H1 (cell line): ENCODE measurements at regions of chr5 and their contacts with region 1.

Region 1: GRCh38 chr5:138975098-138975847 is 100.1 kb upstream of the LRRTM2 start:
- DNase-seq: no peak
- H3K4me3 ChIP-seq: no peak overlapping the region
- H3K27ac ChIP-seq: no peak overlapping the region
- H3K4me1 ChIP-seq: peaks cover 0 to 5% (median 0%) of the 10 kb centered on the region in 4 experiments; a peak in 1 of 7 replicates
- H3K27me3 ChIP-seq: no peaks in the 10 kb centered on the region; a peak in 1 of 7 replicates
- CTCF ChIP-seq: no peak
- EP300 ChIP-seq: no peak
- POLR2A ChIP-seq: no peak
- RAD21 ChIP-seq: no peak

Region 2: GRCh38 chr5:138752951-138753793 is 222.1 kb before region 1 on chr5 and contains the start of gene CTNNA1:
- CTCF ChIA-PET with region 1: no interaction called
- POLR2A ChIA-PET with region 1: no interaction called
- DNase-seq: peak in 1 of 2 experiments; percentile 96
- H3K4me3 ChIP-seq: peak within 1 kb of the TSS; percentile 74 to 91 (median 82)
- H3K27ac ChIP-seq: peak within 1 kb of the TSS; percentile 85
- H3K4me1 ChIP-seq: peaks cover 2 to 11% (median 9%) of the 10 kb centered on the region in 4 experiments; a peak in 5 of 7 replicates
- H3K27me3 ChIP-seq: no peaks in the 10 kb centered on the region
- CTCF ChIP-seq: no peak
- EP300 ChIP-seq: peak in 1 of 2 experiments; percentile 99; a peak in 2 of 3 replicates
- POLR2A ChIP-seq: peak; percentile 87 to 89
- RAD21 ChIP-seq: no peak
- total RNA-seq, gene CTNNA1: 302 and 349 TPM in 2 replicates

Region 3: DNA sequence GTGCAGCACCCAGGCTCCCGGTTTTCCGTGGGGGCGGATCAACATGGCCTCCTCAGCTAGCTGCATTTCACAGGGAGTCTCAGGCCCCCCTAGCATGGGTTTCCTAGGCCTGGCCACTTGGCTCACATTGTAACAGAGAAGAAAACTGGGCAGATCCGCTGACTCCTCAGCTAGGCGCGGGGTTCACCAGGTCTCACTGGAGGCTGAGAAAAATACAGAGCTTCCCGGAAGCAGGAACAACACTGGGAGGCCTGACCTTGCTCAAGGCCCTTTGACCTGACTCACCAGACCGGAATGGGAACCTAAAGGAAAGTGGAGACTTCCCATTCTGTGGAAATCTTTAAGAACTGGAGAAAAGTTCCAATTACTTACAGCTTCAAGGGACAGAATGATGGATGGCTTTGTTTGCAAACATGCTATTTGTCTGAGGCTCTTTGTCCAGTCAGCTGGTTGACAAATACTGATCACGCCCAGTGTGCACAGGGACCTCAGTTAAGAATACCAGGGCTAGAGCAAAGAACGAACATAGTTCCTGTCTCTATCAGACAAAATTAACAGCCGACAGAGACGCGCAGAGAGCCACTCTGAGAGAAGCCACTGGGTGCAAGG is 11.4 kb before region 1 on chr5:
- CTCF ChIA-PET with region 1: interaction called, 39 read pairs
- POLR2A ChIA-PET with region 1: interaction called, 5 read pairs
- DNase-seq: no peak
- H3K4me3 ChIP-seq: no peak overlapping the region
- H3K27ac ChIP-seq: no peak overlapping the region
- H3K4me1 ChIP-seq: peaks cover 0 to 15% (median 10%) of the 10 kb centered on the region in 4 experiments
- H3K27me3 ChIP-seq: no peaks in the 10 kb centered on the region; a peak in 1 of 7 replicates
- CTCF ChIP-seq: no peak
- EP300 ChIP-seq: no peak
- POLR2A ChIP-seq: no peak
- RAD21 ChIP-seq: no peak

Region 4: GRCh38 chr5:138985683-138986082 is 10.4 kb after region 1 on chr5:
- CTCF ChIA-PET with region 1: interaction called, 12 read pairs
- POLR2A ChIA-PET with region 1: interaction called, 3 read pairs
- DNase-seq: peak in 1 of 2 experiments; percentile 35
- H3K4me3 ChIP-seq: no peak overlapping the region
- H3K27ac ChIP-seq: no peak overlapping the region
- H3K4me1 ChIP-seq: no peaks in the 10 kb centered on the region
- H3K27me3 ChIP-seq: no peaks in the 10 kb centered on the region
- CTCF ChIP-seq: no peak
- EP300 ChIP-seq: no peak
- POLR2A ChIP-seq: no peak
- RAD21 ChIP-seq: no peak

Region 5: GRCh38 chr5:139232147-139232724 is 257.0 kb after region 1 on chr5:
- CTCF ChIA-PET with region 1: no interaction called
- POLR2A ChIA-PET with region 1: no interaction called
- DNase-seq: no peak
- H3K4me3 ChIP-seq: no peak overlapping the region
- H3K27ac ChIP-seq: no peak overlapping the region
- H3K4me1 ChIP-seq: no peaks in the 10 kb centered on the region
- H3K27me3 ChIP-seq: no peaks in the 10 kb centered on the region
- CTCF ChIP-seq: no peak
- EP300 ChIP-seq: no peak
- POLR2A ChIP-seq: no peak
- RAD21 ChIP-seq: no peak